Activated naive CD4-positive, alpha-beta T cell treated with anti-CD3 and anti-CD28 coated beads for 36 hours (primary cell): ENCODE measurements at regions of chrX and their contacts with region 1.

Region 1: DNA sequence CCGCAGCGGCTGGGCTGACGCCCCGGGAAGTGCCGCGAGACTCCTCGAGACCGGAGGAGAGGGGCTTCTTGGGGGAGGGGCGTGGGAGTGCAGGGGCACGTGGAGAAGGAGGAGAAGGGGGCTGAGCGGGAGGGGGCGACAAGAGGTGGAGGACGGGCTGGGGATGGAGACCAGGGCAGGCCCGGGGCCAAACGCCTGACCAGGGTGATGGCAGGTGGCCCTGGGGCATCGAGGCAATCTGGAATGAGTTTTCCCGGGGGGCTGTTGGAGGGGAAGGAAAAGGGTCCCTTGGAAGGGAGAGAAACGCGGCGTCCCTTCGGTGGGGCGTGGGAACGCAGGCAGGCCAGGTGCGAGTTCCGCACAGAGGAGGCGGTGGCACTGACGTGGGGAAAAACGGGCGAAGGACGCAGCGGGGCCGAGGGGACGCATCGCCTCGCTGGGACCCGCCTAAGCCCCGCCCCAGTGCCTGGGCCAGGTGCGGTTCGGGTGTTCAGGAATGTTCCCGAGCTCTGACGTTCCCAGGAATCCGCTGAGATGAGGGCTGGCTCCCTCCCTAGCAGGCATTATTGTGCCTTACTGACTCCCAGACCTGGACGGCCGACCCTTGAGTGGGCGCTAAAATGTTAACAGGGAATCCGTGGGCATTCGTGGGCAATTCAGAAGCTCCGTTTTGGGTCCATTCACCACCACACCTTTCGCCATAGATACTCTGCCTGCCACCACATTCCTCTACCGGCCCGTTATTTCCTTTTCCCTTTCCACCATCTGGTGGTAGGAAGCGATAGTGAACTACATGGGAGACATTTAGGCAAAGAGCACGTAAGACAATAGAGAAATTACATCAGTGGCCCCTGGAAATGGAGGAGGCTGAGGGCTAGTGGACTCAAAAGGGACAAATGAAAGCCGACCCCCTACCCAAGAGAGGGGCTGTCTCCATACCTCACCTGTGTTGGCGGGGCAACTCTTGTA is 795 bp upstream of the SH3KBP1 start:
- DNase-seq: peak; percentile 58
- H3K4me3 Mint-ChIP-seq: peak overlapping the region; percentile 78
- H3K27ac Mint-ChIP-seq: peak overlapping the region; percentile 79
- H3K4me1 Mint-ChIP-seq: peaks cover 42% of the 10 kb centered on the region
- H3K27me3 Mint-ChIP-seq: no peaks in the 10 kb centered on the region

Region 2: DNA sequence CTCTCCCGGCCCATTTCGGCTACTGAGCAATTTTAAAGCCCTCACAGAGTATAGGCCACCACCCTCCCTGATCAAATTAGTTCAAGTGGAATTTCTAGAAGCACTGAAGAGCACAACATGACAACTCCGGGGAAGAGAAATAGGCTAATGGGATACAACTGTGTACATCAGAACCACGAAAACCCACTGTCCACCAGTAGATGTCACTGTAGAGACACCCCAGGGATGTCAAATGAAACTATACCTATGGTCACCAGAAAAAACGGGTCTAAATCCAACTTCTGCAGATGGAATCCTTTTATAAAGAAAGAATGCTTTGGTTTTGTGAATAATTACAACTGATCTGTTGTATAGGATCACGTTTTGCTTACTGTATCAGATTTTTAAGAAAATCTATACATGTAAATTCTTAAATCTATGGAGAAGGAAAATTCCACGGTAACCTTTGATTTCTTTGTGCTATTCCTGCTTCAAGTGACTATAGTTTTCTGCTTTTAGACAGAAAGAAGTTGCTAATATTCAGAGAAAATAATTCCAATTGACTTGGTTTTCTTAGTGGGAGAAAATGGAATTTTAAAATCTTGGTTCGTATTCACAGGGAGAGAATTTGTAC is 343.4 kb before region 1 on chrX:
- CTCF ChIA-PET with region 1: no interaction called
- intact Hi-C with region 1: loop called (anchors 1 kb)
- DNase-seq: peak; percentile 67
- H3K4me3 Mint-ChIP-seq: no peak overlapping the region
- H3K27ac Mint-ChIP-seq: peak overlapping the region; percentile 39
- H3K4me1 Mint-ChIP-seq: peaks cover 21% of the 10 kb centered on the region
- H3K27me3 Mint-ChIP-seq: no peaks in the 10 kb centered on the region

Region 3: GRCh38 chrX:19585332-19586082 is 302.7 kb before region 1 on chrX:
- CTCF ChIA-PET with region 1: no interaction called
- intact Hi-C with region 1: no loop called
- DNase-seq: no peak
- H3K4me3 Mint-ChIP-seq: no peak overlapping the region
- H3K27ac Mint-ChIP-seq: no peak overlapping the region
- H3K4me1 Mint-ChIP-seq: peaks cover 10% of the 10 kb centered on the region
- H3K27me3 Mint-ChIP-seq: no peaks in the 10 kb centered on the region

Region 4: GRCh38 chrX:19739683-19740082 is 148.5 kb before region 1 on chrX:
- CTCF ChIA-PET with region 1: interaction called, 5 read pairs
- intact Hi-C with region 1: loop called (anchors 1 kb)
- DNase-seq: peak; percentile 58
- H3K4me3 Mint-ChIP-seq: no peak overlapping the region
- H3K27ac Mint-ChIP-seq: peak overlapping the region; percentile 51
- H3K4me1 Mint-ChIP-seq: peaks cover 75% of the 10 kb centered on the region
- H3K27me3 Mint-ChIP-seq: no peaks in the 10 kb centered on the region

Region 5: GRCh38 chrX:19840899-19841648 is 47.1 kb before region 1 on chrX:
- CTCF ChIA-PET with region 1: interaction called, 4 read pairs
- intact Hi-C with region 1: loop called (anchors 2 kb)
- DNase-seq: peak; percentile 50
- H3K4me3 Mint-ChIP-seq: peak overlapping the region; percentile 66
- H3K27ac Mint-ChIP-seq: peak overlapping the region; percentile 92
- H3K4me1 Mint-ChIP-seq: peaks cover 72% of the 10 kb centered on the region
- H3K27me3 Mint-ChIP-seq: no peaks in the 10 kb centered on the region

Region 6: GRCh38 chrX:20046864-20047263 is 158.7 kb after region 1 on chrX:
- CTCF ChIA-PET with region 1: no interaction called
- intact Hi-C with region 1: no loop called
- DNase-seq: no peak
- H3K4me3 Mint-ChIP-seq: no peak overlapping the region
- H3K27ac Mint-ChIP-seq: no peak overlapping the region
- H3K4me1 Mint-ChIP-seq: no peaks in the 10 kb centered on the region
- H3K27me3 Mint-ChIP-seq: no peaks in the 10 kb centered on the region